ENCODE measurements at regions of chr1 and their contacts with region 1.

Region 1: GRCh38 chr1:54671985-54672608 is 30.5 kb downstream of the MROH7 start:
- DNase-seq: peak; percentile 56
- ATAC-seq: peak; percentile 91
- H3K4me3 ChIP-seq: no peak overlapping the region
- H3K27ac ChIP-seq: no peak overlapping the region
- H3K4me1 ChIP-seq: no peaks in the 10 kb centered on the region
- H3K27me3 ChIP-seq: no peaks in the 10 kb centered on the region
- CTCF ChIP-seq: peak; percentile 97

Region 2: GRCh38 chr1:54791880-54792522 is 119.9 kb after region 1 on chr1:
- CTCF ChIA-PET with region 1: interaction called, 4 read pairs
- POLR2A ChIA-PET with region 1: no interaction called
- in situ Hi-C with region 1: no loop called
- intact Hi-C with region 1: loop called (anchors 5 kb)
- DNase-seq: no peak
- ATAC-seq: peak; percentile 68
- H3K4me3 ChIP-seq: no peak overlapping the region
- H3K27ac ChIP-seq: no peak overlapping the region
- H3K4me1 ChIP-seq: no peaks in the 10 kb centered on the region; the same call in 1 of the 2 replicates
- H3K27me3 ChIP-seq: no peaks in the 10 kb centered on the region
- CTCF ChIP-seq: peak; percentile 88

Region 3: GRCh38 chr1:54810100-54810942 is 138.2 kb after region 1 on chr1:
- CTCF ChIA-PET with region 1: no interaction called
- POLR2A ChIA-PET with region 1: no interaction called
- in situ Hi-C with region 1: no loop called
- intact Hi-C with region 1: loop called (anchors 1 kb)
- DNase-seq: peak; percentile 67
- ATAC-seq: peak; percentile 95
- H3K4me3 ChIP-seq: no peak overlapping the region
- H3K27ac ChIP-seq: no peak overlapping the region
- H3K4me1 ChIP-seq: no peaks in the 10 kb centered on the region
- H3K27me3 ChIP-seq: no peaks in the 10 kb centered on the region; the same call in 1 of the 2 replicates
- CTCF ChIP-seq: peak; percentile 91

Measured in Panc1 (cell line).